ENCODE measurements at regions of chr5 and their contacts with region 1.

Region 1: DNA sequence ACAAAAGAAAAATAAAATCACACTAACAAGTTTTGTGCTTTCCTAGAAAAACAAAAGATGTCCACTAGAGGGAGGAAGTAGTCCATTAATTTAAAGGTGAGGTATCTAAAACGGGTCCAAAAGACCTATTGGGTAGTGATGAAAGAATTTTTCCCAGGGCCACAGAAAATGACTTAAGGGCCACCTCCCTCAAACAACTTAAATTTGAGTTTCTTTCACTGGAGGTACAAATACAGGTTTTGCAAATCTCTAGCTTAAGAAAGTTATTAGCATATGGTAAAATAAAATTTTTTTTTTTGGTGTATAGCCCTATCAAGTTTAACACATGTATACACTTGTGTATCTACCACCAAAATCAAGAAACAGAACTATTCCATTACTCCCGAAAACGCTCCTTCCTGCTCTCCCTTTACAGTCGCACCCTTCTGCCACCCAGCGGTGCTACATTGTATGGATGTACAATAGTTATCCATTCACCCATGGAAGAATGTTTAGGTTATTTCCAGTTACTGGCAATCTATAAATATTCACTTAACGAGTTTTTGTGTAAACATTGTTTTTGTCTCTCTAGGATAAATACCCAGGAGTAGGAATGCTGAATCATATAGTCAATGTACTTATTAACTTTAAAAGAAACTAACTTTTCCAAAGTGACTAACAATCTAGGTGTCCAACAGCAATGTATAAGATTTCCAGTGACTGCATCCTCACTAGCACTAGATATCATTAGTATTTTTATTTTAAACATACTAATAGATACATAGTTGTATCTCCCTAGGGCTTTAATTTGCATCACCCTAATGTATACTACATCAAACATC is 21.9 kb downstream of the DEPDC1B start:
- DNase-seq: no peak
- ATAC-seq: peak; percentile 85
- H3K4me3 ChIP-seq: no peak overlapping the region
- H3K27ac ChIP-seq: no peak overlapping the region
- H3K4me1 ChIP-seq: peaks cover 0 to 6% of the 10 kb centered on the region in 2 experiments; a peak in 1 of 4 replicates
- H3K27me3 ChIP-seq: no peaks in the 10 kb centered on the region
- CTCF ChIP-seq: peak; percentile 35 to 69 (median 63); a peak in 5 of 6 replicates
- POLR2A ChIP-seq: no peak
- RAD21 ChIP-seq: peak; percentile 70

Region 2: GRCh38 chr5:60568646-60569045 is 109.4 kb before region 1 on chr5:
- CTCF ChIA-PET with region 1: no interaction called
- POLR2A ChIA-PET with region 1: no interaction called
- RAD21 ChIA-PET with region 1: no interaction called
- intact Hi-C with region 1: no loop called
- DNase-seq: no peak
- ATAC-seq: no peak
- H3K4me3 ChIP-seq: no peak overlapping the region
- H3K27ac ChIP-seq: no peak overlapping the region
- H3K4me1 ChIP-seq: no peaks in the 10 kb centered on the region
- H3K27me3 ChIP-seq: no peaks in the 10 kb centered on the region
- CTCF ChIP-seq: no peak
- POLR2A ChIP-seq: no peak
- RAD21 ChIP-seq: no peak

Region 3: GRCh38 chr5:60883229-60883628 is 205.2 kb after region 1 on chr5:
- CTCF ChIA-PET with region 1: no interaction called
- POLR2A ChIA-PET with region 1: no interaction called
- RAD21 ChIA-PET with region 1: no interaction called
- intact Hi-C with region 1: loop called (anchors 1 kb)
- DNase-seq: peak; percentile 6
- ATAC-seq: peak; percentile 66
- H3K4me3 ChIP-seq: no peak overlapping the region
- H3K27ac ChIP-seq: no peak overlapping the region
- H3K4me1 ChIP-seq: no peaks in the 10 kb centered on the region
- H3K27me3 ChIP-seq: no peaks in the 10 kb centered on the region
- CTCF ChIP-seq: peak; percentile 31 to 73 (median 63); a peak in 5 of 6 replicates
- POLR2A ChIP-seq: no peak
- RAD21 ChIP-seq: peak; percentile 65

Region 4: GRCh38 chr5:60929024-60929423 is 251.0 kb after region 1 on chr5:
- CTCF ChIA-PET with region 1: no interaction called
- POLR2A ChIA-PET with region 1: no interaction called
- RAD21 ChIA-PET with region 1: interaction called in 1 of 2 experiments, 4 read pairs
- intact Hi-C with region 1: loop called (anchors 5 kb)
- DNase-seq: no peak
- ATAC-seq: no peak
- H3K4me3 ChIP-seq: no peak overlapping the region
- H3K27ac ChIP-seq: no peak overlapping the region
- H3K4me1 ChIP-seq: no peaks in the 10 kb centered on the region
- H3K27me3 ChIP-seq: no peaks in the 10 kb centered on the region
- CTCF ChIP-seq: peak in 2 of 3 experiments; percentile 28 to 49; a peak in 3 of 6 replicates
- POLR2A ChIP-seq: no peak
- RAD21 ChIP-seq: peak; percentile 52

Region 5: GRCh38 chr5:60944904-60945812 is 267.1 kb after region 1 on chr5 and contains the starts of genes ERCC8 and NDUFAF2:
- CTCF ChIA-PET with region 1: no interaction called
- POLR2A ChIA-PET with region 1: no interaction called
- RAD21 ChIA-PET with region 1: no interaction called
- intact Hi-C with region 1: loop called (anchors 1 kb)
- DNase-seq: peak; percentile 84
- ATAC-seq: peak; percentile 93
- H3K4me3 ChIP-seq: peak within 1 kb of the TSS; percentile 85 to 87
- H3K27ac ChIP-seq: peak within 1 kb of the TSS; percentile 38
- H3K4me1 ChIP-seq: peaks cover 8 to 13% of the 10 kb centered on the region in 2 experiments; a peak in 2 of 4 replicates
- H3K27me3 ChIP-seq: no peaks in the 10 kb centered on the region
- CTCF ChIP-seq: no peak
- POLR2A ChIP-seq: peak; percentile 52
- RAD21 ChIP-seq: no peak
- total RNA-seq, gene ERCC8: 15.1 TPM
- total RNA-seq, gene NDUFAF2: 36.9 TPM

Region 6: GRCh38 chr5:60960591-60960990 is 282.5 kb after region 1 on chr5:
- CTCF ChIA-PET with region 1: no interaction called
- POLR2A ChIA-PET with region 1: no interaction called
- RAD21 ChIA-PET with region 1: no interaction called
- intact Hi-C with region 1: loop called (anchors 1 kb)
- DNase-seq: peak; percentile 6
- ATAC-seq: no peak
- H3K4me3 ChIP-seq: no peak overlapping the region
- H3K27ac ChIP-seq: no peak overlapping the region
- H3K4me1 ChIP-seq: no peaks in the 10 kb centered on the region; a peak in 1 of 4 replicates
- H3K27me3 ChIP-seq: no peaks in the 10 kb centered on the region
- CTCF ChIP-seq: peak; percentile 15 to 60 (median 53); a peak in 5 of 6 replicates
- POLR2A ChIP-seq: no peak
- RAD21 ChIP-seq: peak; percentile 38

Region 7: GRCh38 chr5:61933787-61934626 is 1256.0 kb after region 1 on chr5:
- CTCF ChIA-PET with region 1: no interaction called
- POLR2A ChIA-PET with region 1: no interaction called
- RAD21 ChIA-PET with region 1: no interaction called
- intact Hi-C with region 1: loop called (anchors 1 kb)
- DNase-seq: peak; percentile 34
- ATAC-seq: peak; percentile 87
- H3K4me3 ChIP-seq: no peak overlapping the region
- H3K27ac ChIP-seq: no peak overlapping the region
- H3K4me1 ChIP-seq: no peaks in the 10 kb centered on the region
- H3K27me3 ChIP-seq: no peaks in the 10 kb centered on the region; the same call in 1 of the 2 replicates
- CTCF ChIP-seq: peak; percentile 44 to 66 (median 61); a peak in 5 of 6 replicates
- POLR2A ChIP-seq: no peak
- RAD21 ChIP-seq: peak; percentile 81